ENCODE measurements at regions of chr2 and their contacts with region 1.

Region 1: DNA sequence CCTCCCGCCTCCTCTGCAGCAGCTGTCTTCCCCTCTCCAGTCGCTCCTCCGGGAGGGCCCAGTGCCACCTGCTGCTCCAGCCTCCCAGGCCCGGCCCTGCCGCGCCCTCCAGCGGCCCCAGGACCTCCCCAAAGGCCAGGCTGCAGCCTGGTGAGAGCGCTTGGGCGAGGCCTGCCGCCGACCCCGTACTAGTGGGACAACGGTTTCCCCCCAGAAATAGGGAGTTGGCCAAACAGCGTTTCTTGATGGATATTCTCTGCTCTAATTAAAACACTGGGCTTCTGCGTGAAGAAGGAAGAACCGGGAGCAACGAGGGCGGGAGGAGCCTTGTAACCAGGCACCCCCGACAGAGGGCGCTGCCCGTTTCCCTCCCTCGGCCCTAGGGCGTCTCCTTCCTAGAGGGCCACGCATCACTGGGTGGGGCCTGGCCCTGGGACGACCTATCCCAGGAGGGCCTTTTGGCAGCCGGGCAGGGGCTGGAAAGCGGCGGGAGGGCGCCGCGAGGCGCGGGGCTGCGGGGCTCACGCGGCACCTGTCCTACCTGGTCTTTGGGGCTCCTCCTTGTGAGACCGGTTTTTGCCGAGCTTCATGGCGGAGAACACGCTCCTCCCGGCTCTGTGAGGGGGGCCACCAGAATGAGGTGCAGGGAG is 25.4 kb upstream of the OTOF start:
- DNase-seq: peak; percentile 89
- H3K4me3 Mint-ChIP-seq: peak overlapping the region; percentile 70
- H3K27ac Mint-ChIP-seq: peak overlapping the region; percentile 53
- H3K4me1 Mint-ChIP-seq: peaks cover 7% of the 10 kb centered on the region
- H3K27me3 Mint-ChIP-seq: peaks cover 9% of the 10 kb centered on the region

Region 2: DNA sequence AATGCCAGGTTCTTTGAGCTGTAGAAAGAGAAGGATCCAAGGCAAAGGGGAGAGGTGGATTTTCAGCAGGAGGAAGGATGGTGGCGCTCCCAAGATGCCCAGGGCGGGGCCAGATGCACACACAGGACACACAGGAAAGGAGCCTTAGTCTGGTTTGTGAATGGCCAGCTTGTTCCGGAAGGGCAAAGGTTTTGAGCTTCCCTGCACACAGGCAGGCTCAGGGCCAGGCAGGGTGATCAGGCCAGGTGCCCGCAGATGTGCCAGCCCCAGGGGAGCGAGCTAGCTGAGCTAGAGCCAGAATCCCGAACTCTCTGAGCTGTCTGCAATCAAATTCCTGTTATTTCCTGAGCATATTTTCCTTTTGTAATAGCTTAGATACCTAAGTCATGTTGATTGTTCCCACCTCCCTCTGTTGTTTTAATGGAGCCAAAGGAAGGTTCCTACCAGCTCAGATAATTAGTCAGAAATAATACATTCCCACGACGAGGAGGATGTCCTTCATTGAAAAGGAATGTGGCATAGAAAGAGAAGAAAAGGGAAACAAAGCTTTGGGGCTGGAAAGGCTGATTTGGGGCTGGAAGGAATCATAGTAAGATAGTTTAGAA is 11.7 kb before region 1 on chr2:
- CTCF ChIA-PET with region 1: interaction called, 13 read pairs
- POLR2A ChIA-PET with region 1: interaction called, 4 read pairs
- DNase-seq: no peak
- H3K4me3 Mint-ChIP-seq: no peak overlapping the region
- H3K27ac Mint-ChIP-seq: no peak overlapping the region
- H3K4me1 Mint-ChIP-seq: peaks cover 23% of the 10 kb centered on the region
- H3K27me3 Mint-ChIP-seq: no peaks in the 10 kb centered on the region

Region 3: DNA sequence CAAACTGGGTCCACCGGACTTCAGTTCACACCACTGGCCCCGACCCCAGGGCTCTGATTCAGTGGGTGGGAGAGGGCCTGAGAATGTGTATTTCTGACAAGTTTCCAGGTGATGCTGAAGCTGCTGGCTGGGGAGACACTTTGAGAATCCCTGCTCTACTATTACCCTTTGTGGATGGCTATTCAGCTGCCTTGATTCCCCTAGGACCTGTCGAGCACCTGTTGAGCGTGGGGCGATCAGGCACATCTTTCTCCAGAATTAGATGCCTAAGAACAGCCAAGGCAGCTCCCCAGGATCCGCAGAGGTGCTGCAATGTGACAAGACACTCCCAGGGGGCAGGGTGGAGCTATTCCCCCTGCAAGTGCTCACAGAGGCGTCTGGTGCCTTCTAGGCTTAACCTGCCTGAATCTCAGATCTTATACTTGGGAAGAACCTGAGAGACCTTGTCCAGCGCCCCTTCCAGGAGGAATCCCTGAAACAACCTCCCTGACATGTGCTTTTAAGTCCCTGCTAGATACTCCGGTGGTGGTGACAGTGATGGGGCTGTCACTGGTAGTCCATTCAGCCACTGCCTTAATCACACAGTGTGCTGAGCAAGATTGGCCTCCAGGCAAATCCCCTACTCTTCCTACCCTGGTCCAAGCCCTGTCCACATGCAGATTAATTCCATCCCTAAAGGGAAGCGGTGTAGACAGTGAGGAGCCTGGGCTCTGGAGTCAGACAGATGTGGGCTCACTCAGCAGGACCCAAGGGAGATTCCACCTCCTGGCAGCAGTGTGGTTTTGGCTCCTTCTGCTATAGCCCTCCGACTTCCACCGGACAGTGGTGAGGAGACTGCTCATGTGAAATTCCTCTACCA is 17.9 kb after region 1 on chr2:
- CTCF ChIA-PET with region 1: interaction called, 25 read pairs
- POLR2A ChIA-PET with region 1: no interaction called
- DNase-seq: no peak
- H3K4me3 Mint-ChIP-seq: no peak overlapping the region
- H3K27ac Mint-ChIP-seq: no peak overlapping the region
- H3K4me1 Mint-ChIP-seq: peaks cover 11% of the 10 kb centered on the region
- H3K27me3 Mint-ChIP-seq: peaks cover 11% of the 10 kb centered on the region

Region 4: GRCh38 chr2:26569216-26570082 is 66.1 kb after region 1 on chr2:
- CTCF ChIA-PET with region 1: no interaction called
- POLR2A ChIA-PET with region 1: no interaction called
- DNase-seq: no peak
- H3K4me3 Mint-ChIP-seq: no peak overlapping the region
- H3K27ac Mint-ChIP-seq: no peak overlapping the region
- H3K4me1 Mint-ChIP-seq: no peaks in the 10 kb centered on the region
- H3K27me3 Mint-ChIP-seq: peaks cover 39% of the 10 kb centered on the region

Region 5: DNA sequence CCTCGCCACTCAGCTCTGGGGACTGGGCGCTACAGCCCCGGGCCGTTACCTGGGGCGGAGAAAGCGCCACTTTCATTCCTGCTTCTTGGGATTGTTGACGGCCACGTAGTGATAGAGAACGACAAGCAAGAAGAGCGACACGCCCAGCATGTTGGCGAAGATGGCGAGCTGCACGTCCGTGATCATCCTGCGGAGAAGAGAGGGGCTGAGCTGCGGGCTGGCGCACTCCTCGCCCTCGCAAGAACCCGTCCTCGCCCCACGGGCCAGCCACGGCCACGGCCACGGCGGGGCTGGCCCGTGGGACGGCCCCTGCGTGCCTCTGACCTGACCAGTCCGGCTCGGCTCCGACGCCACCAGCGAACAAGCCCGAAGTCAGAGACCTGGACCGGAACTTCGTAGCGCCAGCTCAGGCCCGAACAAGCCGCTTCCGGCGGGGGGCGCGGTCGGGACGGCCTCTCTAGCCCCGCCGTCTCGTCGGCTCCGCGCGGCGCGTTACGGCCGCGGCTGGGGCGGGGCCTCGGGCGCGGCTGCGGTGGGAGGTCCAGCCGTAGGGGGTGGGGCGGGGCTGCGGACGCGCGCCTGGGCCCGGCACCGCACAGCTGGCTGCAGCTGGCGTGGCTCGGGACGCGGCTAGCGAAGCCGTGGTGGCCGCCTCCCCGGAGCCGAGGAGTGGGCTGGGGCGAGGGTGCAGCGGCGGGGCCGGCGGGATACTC is 568.1 kb after region 1 on chr2 and contains the start of gene OST4:
- CTCF ChIA-PET with region 1: no interaction called
- POLR2A ChIA-PET with region 1: no interaction called
- DNase-seq: peak; percentile 93
- H3K4me3 Mint-ChIP-seq: peak within 1 kb of the TSS; percentile 99
- H3K27ac Mint-ChIP-seq: peak within 1 kb of the TSS; percentile 95
- H3K4me1 Mint-ChIP-seq: peaks cover 73% of the 10 kb centered on the region
- H3K27me3 Mint-ChIP-seq: no peaks in the 10 kb centered on the region
- total RNA-seq, gene OST4: 305 to 312 TPM